Colonic mucosa (tissue), 4 donors: ENCODE measurements at regions of chr21 and their contacts with region 1.

Region 1: GRCh38 chr21:38811257-38811656 is 5.5 kb downstream of the ETS2 start:
- DNase-seq: peak; percentile 44
- H3K4me3 ChIP-seq: peak overlapping the region; percentile 5
- H3K27ac ChIP-seq: peak overlapping the region; percentile 95
- H3K4me1 ChIP-seq: peaks cover 5% of the 10 kb centered on the region
- H3K27me3 ChIP-seq: no peaks in the 10 kb centered on the region
- CTCF ChIP-seq: no peak

Region 2: DNA sequence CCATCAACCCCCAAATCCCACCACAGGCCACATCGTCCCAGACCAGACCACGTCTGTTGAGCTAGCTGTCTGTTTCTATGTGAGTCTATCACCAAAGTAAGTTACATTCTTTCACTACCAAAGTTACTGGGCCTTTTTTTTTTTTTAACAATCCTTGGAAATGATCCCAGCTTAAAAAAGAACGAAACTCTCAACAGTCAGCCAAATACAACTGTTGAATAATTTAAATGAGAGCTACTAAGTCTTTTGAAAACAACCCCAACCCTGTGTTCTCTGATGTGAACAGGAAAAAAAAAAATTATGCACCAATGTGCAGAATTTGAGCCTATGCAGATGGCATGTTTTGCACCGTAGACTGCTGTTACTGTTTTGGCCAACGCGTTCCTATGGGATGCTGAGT is 139.5 kb before region 1 on chr21:
- intact Hi-C with region 1: no loop called
- DNase-seq: no peak
- H3K4me3 ChIP-seq: no peak overlapping the region
- H3K27ac ChIP-seq: no peak overlapping the region
- H3K4me1 ChIP-seq: no peaks in the 10 kb centered on the region
- H3K27me3 ChIP-seq: no peaks in the 10 kb centered on the region
- CTCF ChIP-seq: no peak

Region 3: GRCh38 chr21:38773099-38774061 is 37.9 kb before region 1 on chr21:
- intact Hi-C with region 1: no loop called
- DNase-seq: no peak
- H3K4me3 ChIP-seq: no peak overlapping the region
- H3K27ac ChIP-seq: no peak overlapping the region
- H3K4me1 ChIP-seq: no peaks in the 10 kb centered on the region
- H3K27me3 ChIP-seq: no peaks in the 10 kb centered on the region
- CTCF ChIP-seq: no peak

Region 4: DNA sequence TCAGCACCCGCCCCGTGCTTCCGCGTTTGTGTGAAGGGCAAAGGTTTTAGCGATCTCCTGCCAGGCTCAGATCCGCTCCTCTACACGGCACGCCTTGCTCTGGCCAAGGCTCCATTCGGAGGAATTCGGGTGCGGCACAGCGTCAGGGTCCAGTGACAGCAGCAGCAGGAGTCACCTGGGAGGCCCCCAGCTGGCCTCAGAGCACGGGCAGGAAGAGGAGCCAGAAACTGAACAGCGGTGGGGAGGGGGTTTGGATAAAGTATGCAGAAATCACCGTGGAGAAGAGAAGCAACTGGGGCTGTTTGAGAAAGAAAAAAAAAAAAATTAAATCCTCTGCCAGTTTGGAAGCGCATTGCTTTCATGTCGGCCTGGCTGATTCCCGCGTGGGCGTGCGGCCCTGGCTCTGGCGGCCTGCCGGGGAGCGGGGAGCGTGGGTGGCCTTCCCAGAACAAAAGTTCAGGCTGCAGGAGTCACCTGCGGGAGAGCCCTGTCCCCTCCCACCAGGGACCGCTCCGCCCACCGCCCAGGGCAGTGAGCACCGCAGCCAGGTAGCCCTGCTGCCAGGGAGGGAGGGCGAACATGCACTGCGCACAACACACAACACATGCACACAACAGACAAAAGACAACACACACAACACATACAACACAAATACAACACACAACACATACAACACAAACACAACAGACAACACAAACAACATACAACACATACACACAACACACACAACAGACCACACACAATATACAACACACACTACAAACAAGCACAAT is 102.0 kb after region 1 on chr21:
- intact Hi-C with region 1: loop called (anchors 5 kb)
- DNase-seq: peak; percentile 92
- H3K4me3 ChIP-seq: no peak overlapping the region
- H3K27ac ChIP-seq: peak overlapping the region; percentile 88
- H3K4me1 ChIP-seq: peaks cover 3% of the 10 kb centered on the region
- H3K27me3 ChIP-seq: no peaks in the 10 kb centered on the region
- CTCF ChIP-seq: no peak